ENCODE measurements at regions of chr7 and their contacts with region 1.

Region 1: GRCh38 chr7:151705636-151706276 is 171.2 kb downstream of the PRKAG2 start:
- DNase-seq: no peak
- ATAC-seq: peak; percentile 37
- H3K4me3 Mint-ChIP-seq: no peak overlapping the region
- H3K27ac Mint-ChIP-seq: no peak overlapping the region
- H3K4me1 Mint-ChIP-seq: peaks cover 3% of the 10 kb centered on the region
- H3K27me3 Mint-ChIP-seq: no peaks in the 10 kb centered on the region
- CTCF ChIP-seq: no peak

Region 2: DNA sequence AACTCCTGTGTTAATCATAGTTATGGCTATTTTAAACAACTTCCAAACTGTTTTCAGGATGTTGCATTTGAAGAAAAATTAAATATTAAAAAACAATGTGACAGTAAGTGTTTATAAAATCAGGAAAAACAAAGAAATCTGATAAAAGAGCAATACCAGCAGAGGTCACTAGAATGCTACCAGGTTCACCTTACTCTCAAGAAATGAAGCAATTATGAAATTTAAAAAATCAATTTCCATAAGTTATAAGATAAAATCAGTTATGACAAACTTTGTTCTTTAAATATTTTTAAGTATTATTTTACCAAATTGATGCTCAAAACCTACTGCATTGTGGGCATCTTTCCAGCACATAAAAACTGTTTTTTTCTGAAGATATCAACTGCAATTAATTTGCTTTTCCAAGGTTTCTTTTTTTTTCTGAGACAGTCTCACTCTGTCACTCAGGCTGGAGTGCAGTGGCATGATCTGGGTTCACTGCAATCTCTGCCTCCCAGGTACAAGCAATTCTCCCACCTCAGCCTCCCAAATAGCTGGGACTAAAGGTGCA is 135.3 kb before region 1 on chr7:
- CTCF ChIA-PET with region 1: no interaction called
- POLR2A ChIA-PET with region 1: no interaction called
- intact Hi-C with region 1: loop called (anchors 1 kb)
- DNase-seq: no peak
- ATAC-seq: no peak
- H3K4me3 Mint-ChIP-seq: no peak overlapping the region
- H3K27ac Mint-ChIP-seq: no peak overlapping the region
- H3K4me1 Mint-ChIP-seq: no peaks in the 10 kb centered on the region
- H3K27me3 Mint-ChIP-seq: no peaks in the 10 kb centered on the region
- CTCF ChIP-seq: no peak

Region 3: GRCh38 chr7:151626422-151627115 is 79.2 kb before region 1 on chr7:
- CTCF ChIA-PET with region 1: no interaction called
- POLR2A ChIA-PET with region 1: no interaction called
- intact Hi-C with region 1: loop called (anchors 1 kb)
- DNase-seq: no peak
- ATAC-seq: peak; percentile 50
- H3K4me3 Mint-ChIP-seq: no peak overlapping the region
- H3K27ac Mint-ChIP-seq: no peak overlapping the region
- H3K4me1 Mint-ChIP-seq: peaks cover 11% of the 10 kb centered on the region
- H3K27me3 Mint-ChIP-seq: no peaks in the 10 kb centered on the region
- CTCF ChIP-seq: no peak

Region 4: GRCh38 chr7:151680721-151681209 is 25.0 kb before region 1 on chr7:
- CTCF ChIA-PET with region 1: no interaction called
- POLR2A ChIA-PET with region 1: no interaction called
- intact Hi-C with region 1: no loop called
- DNase-seq: no peak
- ATAC-seq: no peak
- H3K4me3 Mint-ChIP-seq: no peak overlapping the region
- H3K27ac Mint-ChIP-seq: no peak overlapping the region
- H3K4me1 Mint-ChIP-seq: peaks cover 6% of the 10 kb centered on the region
- H3K27me3 Mint-ChIP-seq: no peaks in the 10 kb centered on the region
- CTCF ChIP-seq: no peak